Heart left ventricle (tissue), 16 donors: ENCODE measurements at regions of chr20 and their contacts with region 1.

Region 1: DNA sequence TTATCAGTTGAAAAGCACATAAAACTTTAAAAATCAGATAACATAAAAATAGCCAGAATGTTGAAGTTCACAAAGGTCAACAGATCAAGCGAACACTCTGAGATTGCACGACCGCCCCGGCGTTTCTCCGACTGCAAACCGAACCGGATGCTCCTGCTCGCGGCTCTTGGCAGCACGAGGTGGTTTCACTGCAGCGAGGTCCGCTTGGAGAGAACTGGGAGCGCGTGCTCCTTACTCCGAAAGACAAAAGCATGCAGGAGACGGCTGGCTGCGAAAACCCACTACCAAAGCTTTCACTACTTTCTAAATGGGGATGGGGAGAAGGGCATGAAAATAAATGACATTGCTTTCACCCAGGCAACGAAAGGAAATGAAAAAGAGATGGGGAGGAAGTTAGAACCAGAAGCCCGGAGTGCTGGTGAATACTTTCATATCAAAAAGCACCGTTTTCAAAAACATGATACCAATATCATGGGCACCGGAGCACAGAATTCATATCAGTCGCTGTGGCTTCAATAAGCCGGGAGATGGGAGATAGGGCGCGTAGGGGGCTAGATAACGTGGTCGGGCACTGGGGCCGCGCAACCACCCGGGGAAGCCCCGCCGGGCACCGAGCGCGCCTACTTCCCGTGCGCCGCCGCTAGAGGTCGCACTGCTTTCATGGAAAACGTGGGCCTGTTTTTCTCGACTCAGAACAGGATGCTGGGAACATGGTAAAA is 8.3 kb upstream of the ANKRD60 start:
- DNase-seq: peak; percentile 53 to 83 (median 71)
- ATAC-seq: peak; percentile 82 to 93 (median 92)
- H3K4me3 ChIP-seq: peak overlapping the region in 11 of 12 donors; percentile 16 to 59 (median 50)
- H3K27ac ChIP-seq: peak overlapping the region in 1 of 12 donors; percentile 18
- H3K4me1 ChIP-seq: peaks cover 0 to 11% (median 0%) of the 10 kb centered on the region in 12 donors
- H3K27me3 ChIP-seq: no peaks in the 10 kb centered on the region
- CTCF ChIP-seq: peak; percentile 94 to 98 (median 96)
- POLR2A ChIP-seq: no peak

Region 2: GRCh38 chr20:57387945-57388371 is 848.8 kb before region 1 on chr20:
- intact Hi-C with region 1: no loop called
- DNase-seq: peak in 1 of 5 donors; percentile 21
- ATAC-seq: no peak
- H3K4me3 ChIP-seq: no peak overlapping the region
- H3K27ac ChIP-seq: no peak overlapping the region
- H3K4me1 ChIP-seq: peaks cover 0 to 54% (median 32%) of the 10 kb centered on the region in 12 donors
- H3K27me3 ChIP-seq: no peaks in the 10 kb centered on the region
- CTCF ChIP-seq: no peak
- POLR2A ChIP-seq: no peak

Region 3: GRCh38 chr20:58094160-58094559 is 142.6 kb before region 1 on chr20:
- intact Hi-C with region 1: no loop called
- DNase-seq: no peak
- ATAC-seq: no peak
- H3K4me3 ChIP-seq: no peak overlapping the region
- H3K27ac ChIP-seq: no peak overlapping the region
- H3K4me1 ChIP-seq: no peaks in the 10 kb centered on the region
- H3K27me3 ChIP-seq: peaks cover 0 to 12% (median 0%) of the 10 kb centered on the region in 9 donors
- CTCF ChIP-seq: no peak
- POLR2A ChIP-seq: no peak

Region 4: DNA sequence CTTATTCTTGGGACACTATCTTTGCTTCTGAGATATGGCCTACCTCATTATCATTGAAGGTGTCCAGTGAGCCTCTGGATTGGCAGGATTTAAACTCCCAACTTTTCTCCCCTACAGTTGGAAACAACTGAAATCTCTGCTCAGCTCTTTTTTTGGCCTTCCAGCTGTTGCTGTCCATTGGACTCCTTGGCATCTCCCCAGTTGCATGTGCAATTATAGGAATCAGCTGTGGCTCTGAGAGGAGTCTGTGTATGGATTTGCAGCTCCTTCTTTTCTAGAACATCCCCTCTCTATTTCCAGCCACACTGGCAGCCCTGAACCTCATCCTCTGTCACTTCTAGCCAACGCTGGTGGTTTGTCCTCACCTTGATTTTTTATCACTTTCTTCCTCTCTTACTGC is 93.9 kb after region 1 on chr20:
- intact Hi-C with region 1: no loop called
- DNase-seq: peak in 2 of 5 donors; percentile 27 to 40
- ATAC-seq: peak in 1 of 4 donors; percentile 26
- H3K4me3 ChIP-seq: no peak overlapping the region
- H3K27ac ChIP-seq: no peak overlapping the region
- H3K4me1 ChIP-seq: peaks cover 0 to 40% (median 14%) of the 10 kb centered on the region in 12 donors
- H3K27me3 ChIP-seq: no peaks in the 10 kb centered on the region
- CTCF ChIP-seq: no peak
- POLR2A ChIP-seq: no peak

Region 5: DNA sequence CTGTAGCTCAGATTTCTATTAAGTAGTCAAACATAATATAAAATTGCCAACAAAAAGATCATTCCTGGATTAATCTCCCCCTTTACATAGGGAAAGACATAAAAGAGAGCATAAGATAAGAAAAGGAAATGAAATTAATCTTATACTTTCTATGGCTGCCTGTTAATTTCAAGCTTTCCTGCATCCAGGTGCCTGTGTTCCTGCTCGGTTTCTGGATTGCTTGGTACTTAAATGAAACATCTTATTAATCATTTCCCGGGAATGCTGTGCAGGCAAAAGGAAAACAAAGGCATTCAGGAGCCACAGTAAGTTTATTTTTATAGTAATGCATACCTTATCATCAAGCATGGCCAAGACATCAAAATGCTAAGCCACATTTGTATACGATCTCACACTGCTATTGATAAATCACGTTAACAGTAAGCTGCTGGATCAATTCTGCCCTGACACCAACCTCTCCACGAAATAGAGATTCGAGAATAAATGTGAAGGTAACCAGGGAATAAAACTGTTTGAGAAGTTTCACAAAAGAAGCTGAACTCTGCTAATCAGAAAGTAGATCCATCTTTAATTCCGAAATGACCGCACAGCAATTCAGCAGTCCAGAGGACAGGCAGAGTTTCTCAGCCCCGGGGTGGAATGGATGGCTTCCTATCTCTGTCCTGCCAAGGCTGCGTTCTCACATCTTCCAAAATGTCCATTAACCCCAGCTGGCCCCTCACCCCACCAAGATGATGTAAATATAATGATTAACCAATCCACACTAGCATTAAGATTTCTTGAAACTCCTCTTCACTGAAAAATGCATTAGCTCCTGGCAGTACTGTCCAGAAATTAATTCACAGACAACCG is 311.1 kb after region 1 on chr20:
- intact Hi-C with region 1: loop called in 1 of 10 experiments (anchors 5 kb)
- DNase-seq: no peak
- ATAC-seq: no peak
- H3K4me3 ChIP-seq: no peak overlapping the region
- H3K27ac ChIP-seq: no peak overlapping the region
- H3K4me1 ChIP-seq: no peaks in the 10 kb centered on the region
- H3K27me3 ChIP-seq: peaks cover 0 to 28% (median 8%) of the 10 kb centered on the region in 9 donors
- CTCF ChIP-seq: no peak
- POLR2A ChIP-seq: no peak

Region 6: DNA sequence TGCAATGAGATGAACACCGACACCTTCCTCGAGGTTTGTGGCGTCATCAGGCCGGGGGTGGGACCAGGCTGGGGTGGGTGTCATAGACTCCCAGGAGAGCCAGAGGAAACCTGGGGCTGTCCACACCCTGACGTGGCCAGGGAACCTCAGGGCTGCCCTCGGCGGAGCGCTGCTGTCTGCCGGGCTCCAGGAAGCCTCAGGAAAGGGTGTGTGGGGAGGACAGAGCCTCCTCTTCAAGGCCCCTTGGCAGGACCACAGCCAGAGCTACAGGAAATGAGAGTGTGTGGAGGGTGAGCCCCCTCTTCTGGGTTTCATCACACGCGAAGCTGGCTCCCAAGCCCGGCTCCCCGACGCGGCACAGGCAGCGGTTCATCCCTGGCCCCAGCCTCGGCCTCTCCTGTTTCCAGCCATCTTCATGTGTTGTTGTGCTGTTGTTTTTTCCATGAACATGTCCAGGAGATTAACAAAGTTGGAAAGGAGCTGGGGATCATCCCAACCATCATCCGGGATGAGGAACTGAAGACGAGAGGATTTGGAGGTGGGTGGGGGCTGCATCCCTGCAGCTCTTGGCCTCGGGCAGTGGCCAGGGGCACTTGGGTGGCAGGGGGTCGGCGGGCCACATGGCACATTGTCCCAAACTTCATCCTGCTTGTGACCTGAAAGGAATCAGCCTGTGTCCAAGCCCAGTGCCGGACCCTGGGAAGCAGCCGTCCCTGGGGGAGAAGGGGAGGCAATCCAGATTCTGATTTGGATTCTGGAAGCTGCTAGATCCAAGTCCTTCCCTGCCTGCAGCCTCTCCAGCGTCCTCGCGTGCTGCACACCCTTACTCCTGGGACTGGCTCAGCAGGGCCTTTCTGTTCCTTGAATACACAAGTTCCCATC is 462.2 kb after region 1 on chr20:
- intact Hi-C with region 1: loop called in 3 of 10 experiments (anchors 5 kb)
- DNase-seq: peak in 1 of 5 donors; percentile 22
- ATAC-seq: peak in 3 of 4 donors; percentile 10 to 32 (median 17)
- H3K4me3 ChIP-seq: no peak overlapping the region
- H3K27ac ChIP-seq: no peak overlapping the region
- H3K4me1 ChIP-seq: peaks cover 0 to 9% (median 7%) of the 10 kb centered on the region in 12 donors
- H3K27me3 ChIP-seq: no peaks in the 10 kb centered on the region
- CTCF ChIP-seq: no peak
- POLR2A ChIP-seq: no peak

Region 7: DNA sequence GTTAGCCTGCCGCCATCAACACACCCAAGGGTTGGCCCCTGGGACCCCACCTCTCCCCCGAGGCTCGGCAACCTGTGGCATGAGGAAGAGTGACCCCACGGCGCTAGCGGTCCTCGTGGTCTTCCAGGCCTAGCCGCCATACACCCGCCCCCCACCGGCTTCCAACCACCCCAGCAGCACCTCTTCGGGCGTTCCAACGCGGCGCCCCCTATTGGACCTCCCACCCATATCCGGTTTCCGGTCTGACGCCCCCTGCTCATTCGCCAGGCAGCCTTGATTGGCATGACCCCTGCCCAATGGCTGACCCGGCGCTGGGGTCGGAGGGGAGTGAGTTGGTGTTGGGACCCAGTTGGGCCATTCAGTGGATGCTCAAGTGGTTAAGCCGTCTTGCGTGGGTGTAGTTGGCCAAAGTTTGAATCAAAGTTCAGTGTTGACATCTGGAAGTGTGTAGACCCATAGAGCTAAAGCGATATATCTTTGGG is 614.0 kb after region 1 on chr20 and contains the start of gene GNAS-AS1:
- intact Hi-C with region 1: loop called in 6 of 10 experiments (anchors 1 to 10 kb)
- DNase-seq: peak; percentile 83 to 91 (median 88)
- ATAC-seq: peak; percentile 79 to 91 (median 88)
- H3K4me3 ChIP-seq: peak within 1 kb of the TSS; percentile 15 to 78 (median 57)
- H3K27ac ChIP-seq: no peak within 1 kb of the TSS
- H3K4me1 ChIP-seq: peaks cover 0 to 27% (median 5%) of the 10 kb centered on the region in 12 donors
- H3K27me3 ChIP-seq: peaks cover 11 to 61% (median 26%) of the 10 kb centered on the region in 9 donors
- CTCF ChIP-seq: peak in 3 of 12 donors; percentile 15 to 23 (median 22)
- POLR2A ChIP-seq: no peak
- total RNA-seq, gene GNAS-AS1: 0.22 to 0.79 (median 0.29) TPM in 7 of 9 donors, not detected in the others